HepG2 (cell line): ENCODE measurements at regions of chr7 and their contacts with region 1.

Region 1: GRCh38 chr7:1397491-1398327 is 61.6 kb downstream of the MICALL2 start:
- DNase-seq: no peak
- ATAC-seq: no peak
- H3K4me3 ChIP-seq: no peak overlapping the region
- H3K27ac ChIP-seq: no peak overlapping the region
- H3K4me1 ChIP-seq: peaks cover 6% of the 10 kb centered on the region; the same call in 1 of the 2 replicates
- H3K27me3 ChIP-seq: peaks cover 13 to 77% of the 10 kb centered on the region in 2 experiments; a peak in 4 of 5 replicates
- CTCF ChIP-seq: no peak
- EP300 ChIP-seq: no peak
- POLR2A ChIP-seq: no peak
- RAD21 ChIP-seq: no peak

Region 2: GRCh38 chr7:1377103-1377909 is 20.4 kb before region 1 on chr7:
- CTCF ChIA-PET with region 1: no interaction called
- POLR2A ChIA-PET with region 1: no interaction called
- in situ Hi-C with region 1: no loop called
- intact Hi-C with region 1: loop called (anchors 1 kb)
- DNase-seq: no peak
- ATAC-seq: no peak
- H3K4me3 ChIP-seq: no peak overlapping the region
- H3K27ac ChIP-seq: no peak overlapping the region
- H3K4me1 ChIP-seq: peaks cover 11% of the 10 kb centered on the region
- H3K27me3 ChIP-seq: peaks cover 5 to 22% of the 10 kb centered on the region in 2 experiments; a peak in 4 of 5 replicates
- CTCF ChIP-seq: peak; percentile 49
- EP300 ChIP-seq: no peak
- POLR2A ChIP-seq: no peak
- RAD21 ChIP-seq: no peak

Region 3: GRCh38 chr7:1447551-1448244 is 50.0 kb after region 1 on chr7:
- CTCF ChIA-PET with region 1: no interaction called
- POLR2A ChIA-PET with region 1: no interaction called
- in situ Hi-C with region 1: no loop called
- intact Hi-C with region 1: no loop called
- DNase-seq: no peak
- ATAC-seq: no peak
- H3K4me3 ChIP-seq: no peak overlapping the region
- H3K27ac ChIP-seq: no peak overlapping the region
- H3K4me1 ChIP-seq: peaks cover 8% of the 10 kb centered on the region
- H3K27me3 ChIP-seq: no peaks in the 10 kb centered on the region; a peak in 1 of 5 replicates
- CTCF ChIP-seq: no peak
- EP300 ChIP-seq: no peak
- POLR2A ChIP-seq: no peak
- RAD21 ChIP-seq: no peak

Region 4: GRCh38 chr7:1638215-1638661 is 240.5 kb after region 1 on chr7:
- CTCF ChIA-PET with region 1: no interaction called
- POLR2A ChIA-PET with region 1: no interaction called
- in situ Hi-C with region 1: no loop called
- intact Hi-C with region 1: no loop called
- DNase-seq: no peak
- ATAC-seq: no peak
- H3K4me3 ChIP-seq: no peak overlapping the region
- H3K27ac ChIP-seq: no peak overlapping the region
- H3K4me1 ChIP-seq: no peaks in the 10 kb centered on the region
- H3K27me3 ChIP-seq: peaks cover 4 to 20% of the 10 kb centered on the region in 2 experiments; a peak in 4 of 5 replicates
- CTCF ChIP-seq: no peak
- EP300 ChIP-seq: no peak
- POLR2A ChIP-seq: no peak
- RAD21 ChIP-seq: no peak